GM12878 (cell line): ENCODE measurements at regions of chr13 and their contacts with region 1.

Region 1: DNA sequence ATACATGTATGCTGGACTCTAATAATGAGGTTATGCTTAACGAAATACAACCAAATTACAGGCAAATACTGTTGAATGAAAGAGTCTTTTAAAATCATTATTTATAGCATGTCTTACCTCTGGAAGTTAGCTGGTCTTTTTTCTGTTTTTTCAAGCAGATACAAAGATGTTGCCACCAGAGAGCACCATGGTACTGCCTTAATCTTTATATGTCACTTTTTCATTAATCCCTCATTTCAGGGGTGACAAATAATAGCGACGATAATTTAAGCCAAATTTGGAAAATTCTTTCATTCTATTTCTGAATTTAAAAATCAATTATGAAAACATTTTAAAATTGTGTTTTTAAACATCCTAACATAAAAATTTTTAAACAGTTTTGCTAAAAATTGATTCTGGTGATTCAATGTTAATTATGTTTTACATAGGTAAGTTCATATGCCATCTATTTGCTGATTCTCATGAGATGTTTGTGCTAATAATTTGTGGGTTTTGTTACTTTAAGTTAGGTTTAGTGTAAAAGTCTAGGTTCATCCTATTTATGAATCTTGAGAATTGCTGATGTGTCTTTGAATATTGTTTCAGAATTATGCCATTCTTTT is 379.3 kb upstream of the SGCG start:
- DNase-seq: no peak
- ATAC-seq: peak; percentile 39
- H3K4me3 ChIP-seq: no peak overlapping the region
- H3K27ac ChIP-seq: no peak overlapping the region
- H3K4me1 ChIP-seq: no peaks in the 10 kb centered on the region
- H3K27me3 ChIP-seq: no peaks in the 10 kb centered on the region
- CTCF ChIP-seq: peak; percentile 20 to 61 (median 24); a peak in 4 of 6 replicates
- EP300 ChIP-seq: no peak
- POLR2A ChIP-seq: no peak
- RAD21 ChIP-seq: peak; percentile 79

Region 2: DNA sequence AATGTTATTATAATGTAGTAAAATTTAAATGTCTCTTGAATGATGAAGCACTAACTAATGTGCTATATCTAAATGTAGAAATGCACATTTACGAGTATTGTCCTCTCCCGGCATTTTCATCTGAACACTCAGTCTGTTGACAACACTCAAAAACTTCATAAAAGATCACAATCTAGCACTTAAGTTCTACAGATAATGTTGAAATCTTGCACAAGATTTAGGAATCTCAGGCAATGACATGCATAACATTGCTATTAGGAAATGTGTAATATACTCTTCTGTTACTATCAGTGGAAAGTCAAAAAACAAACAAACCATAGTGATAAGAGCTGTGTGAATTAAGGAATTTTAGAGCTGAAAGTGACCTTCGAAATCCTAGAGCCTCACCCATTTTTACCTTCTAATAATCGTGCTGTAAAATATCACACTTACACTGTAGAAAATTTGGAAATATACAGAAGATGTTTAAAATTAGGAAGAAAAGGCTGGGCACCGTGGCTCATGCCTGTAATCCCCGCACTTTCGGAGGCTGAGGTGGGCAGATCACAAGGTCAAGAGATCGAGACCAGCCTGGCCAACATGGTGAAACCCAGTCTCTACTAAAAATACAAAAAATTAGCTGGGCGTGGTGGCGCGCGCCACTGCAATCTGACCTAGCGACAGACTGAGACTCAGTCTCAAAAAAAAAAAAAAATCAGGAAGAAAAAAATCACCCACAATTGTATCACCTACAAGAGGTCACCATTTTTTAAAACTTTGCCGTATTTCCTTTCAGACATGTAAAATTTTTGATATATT is 1861.2 kb before region 1 on chr13:
- CTCF ChIA-PET with region 1: interaction called, 4 read pairs
- POLR2A ChIA-PET with region 1: no interaction called
- RAD21 ChIA-PET with region 1: no interaction called
- SMC1A ChIA-PET with region 1: no interaction called
- in situ Hi-C with region 1: loop called (anchors 25 kb)
- intact Hi-C with region 1: loop called (anchors 5 kb)
- DNase-seq: no peak
- ATAC-seq: no peak
- H3K4me3 ChIP-seq: no peak overlapping the region
- H3K27ac ChIP-seq: no peak overlapping the region
- H3K4me1 ChIP-seq: no peaks in the 10 kb centered on the region
- H3K27me3 ChIP-seq: no peaks in the 10 kb centered on the region
- CTCF ChIP-seq: no peak
- EP300 ChIP-seq: no peak
- POLR2A ChIP-seq: no peak
- RAD21 ChIP-seq: no peak

Region 3: GRCh38 chr13:22744688-22745452 is 56.6 kb before region 1 on chr13:
- CTCF ChIA-PET with region 1: no interaction called
- POLR2A ChIA-PET with region 1: no interaction called
- RAD21 ChIA-PET with region 1: no interaction called
- SMC1A ChIA-PET with region 1: no interaction called
- in situ Hi-C with region 1: no loop called
- intact Hi-C with region 1: no loop called
- DNase-seq: no peak
- ATAC-seq: no peak
- H3K4me3 ChIP-seq: no peak overlapping the region
- H3K27ac ChIP-seq: no peak overlapping the region
- H3K4me1 ChIP-seq: no peaks in the 10 kb centered on the region
- H3K27me3 ChIP-seq: no peaks in the 10 kb centered on the region
- CTCF ChIP-seq: no peak
- EP300 ChIP-seq: no peak
- POLR2A ChIP-seq: no peak
- RAD21 ChIP-seq: no peak

Region 4: DNA sequence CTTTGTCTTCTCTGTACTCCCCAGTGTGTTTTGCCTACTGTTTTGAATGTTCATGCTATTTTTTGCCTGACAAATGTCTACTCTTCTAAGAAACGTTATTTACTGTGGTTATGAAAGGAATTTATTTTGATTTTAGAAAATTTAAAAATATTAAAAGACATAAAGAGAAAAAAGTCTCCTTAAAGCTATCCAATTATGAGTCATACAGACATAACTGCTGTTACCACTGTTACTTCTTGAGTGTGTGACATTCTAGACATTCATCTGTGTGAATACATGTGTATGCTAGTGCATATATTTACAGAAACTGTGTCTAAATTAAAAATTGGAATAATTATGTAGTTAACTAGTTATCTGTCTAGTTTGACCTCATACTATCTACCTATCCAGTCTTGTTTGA is 191.6 kb after region 1 on chr13:
- CTCF ChIA-PET with region 1: interaction called, 6 read pairs
- POLR2A ChIA-PET with region 1: interaction called, 3 read pairs
- RAD21 ChIA-PET with region 1: interaction called, 12 read pairs
- SMC1A ChIA-PET with region 1: interaction called, 4 read pairs
- in situ Hi-C with region 1: no loop called
- intact Hi-C with region 1: no loop called
- DNase-seq: no peak
- ATAC-seq: peak; percentile 82
- H3K4me3 ChIP-seq: no peak overlapping the region
- H3K27ac ChIP-seq: no peak overlapping the region
- H3K4me1 ChIP-seq: no peaks in the 10 kb centered on the region
- H3K27me3 ChIP-seq: no peaks in the 10 kb centered on the region
- CTCF ChIP-seq: no peak
- EP300 ChIP-seq: no peak
- POLR2A ChIP-seq: no peak
- RAD21 ChIP-seq: no peak

Region 5: DNA sequence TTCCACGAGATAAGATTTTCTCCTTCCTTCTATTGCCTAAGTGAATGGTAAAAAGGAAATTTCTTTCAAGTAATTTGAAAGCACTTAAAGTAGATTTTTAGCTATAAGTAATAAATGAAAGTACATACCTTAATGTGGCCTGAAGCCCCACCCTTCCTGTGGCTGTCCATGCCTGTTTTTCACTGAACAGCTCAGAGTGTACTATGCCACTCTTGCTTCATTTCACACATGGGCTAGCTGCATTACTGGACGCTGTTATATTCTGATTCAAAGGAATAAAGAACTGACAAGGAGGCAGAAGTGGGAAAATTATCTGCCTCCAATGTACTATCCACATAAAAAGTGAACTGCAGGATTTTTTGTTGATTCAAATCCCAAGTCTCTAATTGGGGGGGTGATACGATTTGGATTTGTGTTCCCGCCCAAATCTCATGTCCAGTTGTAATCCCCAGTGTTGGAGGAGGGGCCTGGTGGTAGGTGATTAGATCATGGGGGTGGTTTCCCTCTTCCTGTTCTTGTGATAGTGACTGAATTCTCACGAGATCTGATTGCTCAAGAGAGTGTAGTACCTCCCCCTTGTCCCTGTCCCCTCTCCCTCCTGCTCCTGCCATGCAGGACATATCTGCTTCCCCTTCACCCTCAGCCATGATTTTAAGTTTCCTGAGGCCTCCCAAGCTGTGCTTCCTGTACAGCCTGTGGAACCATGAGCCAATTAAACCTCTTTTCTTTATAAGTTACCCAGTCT is 224.5 kb after region 1 on chr13:
- CTCF ChIA-PET with region 1: interaction called, 108 read pairs
- POLR2A ChIA-PET with region 1: no interaction called
- RAD21 ChIA-PET with region 1: interaction called, 84 read pairs
- SMC1A ChIA-PET with region 1: interaction called, 10 read pairs
- in situ Hi-C with region 1: no loop called
- intact Hi-C with region 1: no loop called
- DNase-seq: no peak
- ATAC-seq: peak; percentile 62
- H3K4me3 ChIP-seq: no peak overlapping the region
- H3K27ac ChIP-seq: no peak overlapping the region
- H3K4me1 ChIP-seq: no peaks in the 10 kb centered on the region
- H3K27me3 ChIP-seq: no peaks in the 10 kb centered on the region
- CTCF ChIP-seq: no peak
- EP300 ChIP-seq: no peak
- POLR2A ChIP-seq: no peak
- RAD21 ChIP-seq: no peak

Region 6: GRCh38 chr13:23159230-23159759 is 357.8 kb after region 1 on chr13:
- CTCF ChIA-PET with region 1: no interaction called
- POLR2A ChIA-PET with region 1: no interaction called
- RAD21 ChIA-PET with region 1: interaction called, 3 read pairs
- SMC1A ChIA-PET with region 1: no interaction called
- in situ Hi-C with region 1: no loop called
- intact Hi-C with region 1: loop called (anchors 5 kb)
- DNase-seq: no peak
- ATAC-seq: peak; percentile 50; the same call in 1 of the 3 replicates
- H3K4me3 ChIP-seq: no peak overlapping the region
- H3K27ac ChIP-seq: no peak overlapping the region
- H3K4me1 ChIP-seq: no peaks in the 10 kb centered on the region
- H3K27me3 ChIP-seq: peaks cover 0 to 4% of the 10 kb centered on the region in 2 experiments; a peak in 2 of 4 replicates
- CTCF ChIP-seq: peak; percentile 25 to 45 (median 30); a peak in 5 of 6 replicates
- EP300 ChIP-seq: no peak
- POLR2A ChIP-seq: no peak
- RAD21 ChIP-seq: peak; percentile 17; the same call in 1 of the 2 replicates

Region 7: DNA sequence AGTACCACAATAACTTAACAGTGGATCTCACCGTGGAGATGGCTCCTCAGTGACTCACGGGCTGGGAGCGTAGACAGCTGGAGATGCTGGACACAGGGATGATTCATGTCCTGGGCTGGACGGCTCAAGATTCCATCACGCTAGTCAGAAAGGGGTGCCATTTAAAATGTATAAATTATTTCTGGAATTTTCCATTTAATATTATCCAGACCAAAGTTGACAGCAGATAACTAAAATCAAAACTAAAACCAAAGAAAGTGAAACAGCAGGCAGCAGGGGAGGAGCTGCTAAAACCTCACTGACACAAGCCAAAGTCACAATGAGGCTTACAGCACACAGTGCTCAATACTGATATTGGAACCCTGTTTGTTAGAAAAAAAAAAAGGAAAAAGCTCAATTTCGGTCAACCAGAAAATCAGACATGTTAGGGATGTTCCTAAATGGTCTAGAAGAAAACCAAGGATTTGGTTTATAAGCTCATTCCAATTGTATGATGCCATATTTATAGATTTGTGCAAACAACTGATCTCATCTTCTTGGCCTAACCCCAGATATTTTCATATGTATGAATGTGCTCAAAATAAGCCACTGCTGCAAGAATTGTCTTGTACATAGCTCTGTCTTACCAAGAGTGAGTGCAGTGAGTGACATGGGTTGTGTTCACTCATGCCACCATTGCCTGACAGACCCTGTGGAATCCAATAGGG is 520.2 kb after region 1 on chr13:
- CTCF ChIA-PET with region 1: interaction called, 29 read pairs
- POLR2A ChIA-PET with region 1: no interaction called
- RAD21 ChIA-PET with region 1: interaction called, 14 read pairs
- SMC1A ChIA-PET with region 1: interaction called, 15 read pairs
- in situ Hi-C with region 1: loop called (anchors 5 kb)
- intact Hi-C with region 1: loop called (anchors 1 kb)
- DNase-seq: peak; percentile 35
- ATAC-seq: peak; percentile 93
- H3K4me3 ChIP-seq: peak overlapping the region; percentile 53
- H3K27ac ChIP-seq: peak overlapping the region; percentile 26
- H3K4me1 ChIP-seq: peaks cover 26% of the 10 kb centered on the region
- H3K27me3 ChIP-seq: no peaks in the 10 kb centered on the region
- CTCF ChIP-seq: no peak
- EP300 ChIP-seq: no peak
- POLR2A ChIP-seq: no peak
- RAD21 ChIP-seq: no peak